Caco-2 (cell line): ENCODE measurements at regions of chr7 and their contacts with region 1.

Region 1: DNA sequence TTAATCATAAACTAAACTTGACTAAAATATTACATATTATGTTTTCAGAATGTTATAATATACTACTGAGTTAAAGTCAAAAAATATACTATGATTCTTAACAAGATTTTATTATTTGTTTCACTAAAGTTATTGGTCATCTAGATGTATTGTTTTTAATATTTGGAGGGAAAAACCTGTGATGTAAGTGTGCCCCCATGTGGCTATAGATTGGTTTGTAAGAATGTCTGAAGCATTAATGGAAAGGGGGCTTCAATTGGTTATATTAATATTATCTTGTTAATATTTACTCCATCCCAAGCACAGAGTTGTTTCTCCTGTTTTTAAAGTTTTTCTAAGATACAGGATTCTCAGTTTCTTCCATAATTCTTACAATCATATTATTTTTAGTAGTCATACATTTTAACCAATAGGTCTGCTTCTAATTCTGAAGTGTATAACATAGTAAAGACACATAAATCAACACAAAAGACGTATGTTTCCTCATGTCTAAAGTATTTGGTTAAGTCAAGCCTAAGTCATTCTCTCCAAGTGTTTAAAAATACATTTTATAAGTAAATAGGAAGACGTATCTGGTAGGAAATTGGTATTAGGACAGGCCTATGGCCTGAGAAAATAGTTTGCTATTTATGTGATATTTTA is 58.0 kb downstream of the GNAT3 start:
- DNase-seq: peak in 1 of 2 experiments; percentile 13
- H3K4me3 ChIP-seq: no peak overlapping the region
- H3K4me3 Mint-ChIP-seq: no peak overlapping the region
- H3K27ac Mint-ChIP-seq: no peak overlapping the region
- H3K4me1 ChIP-seq: peaks cover 14% of the 10 kb centered on the region; the same call in 1 of the 2 replicates
- H3K4me1 Mint-ChIP-seq: no peaks in the 10 kb centered on the region
- H3K27me3 ChIP-seq: no peaks in the 10 kb centered on the region
- H3K27me3 Mint-ChIP-seq: no peaks in the 10 kb centered on the region
- CTCF ChIP-seq: peak; percentile 48 to 49

Region 2: GRCh38 chr7:79806161-79806734 is 647.6 kb before region 1 on chr7:
- CTCF ChIA-PET with region 1: no interaction called
- POLR2A ChIA-PET with region 1: no interaction called
- intact Hi-C with region 1: loop called (anchors 10 kb)
- DNase-seq: no peak
- H3K4me3 ChIP-seq: no peak overlapping the region
- H3K4me3 Mint-ChIP-seq: no peak overlapping the region
- H3K27ac Mint-ChIP-seq: no peak overlapping the region
- H3K4me1 ChIP-seq: no peaks in the 10 kb centered on the region
- H3K4me1 Mint-ChIP-seq: peaks cover 7% of the 10 kb centered on the region
- H3K27me3 ChIP-seq: no peaks in the 10 kb centered on the region; the same call in 1 of the 2 replicates
- H3K27me3 Mint-ChIP-seq: no peaks in the 10 kb centered on the region
- CTCF ChIP-seq: peak; percentile 23 to 33

Region 3: GRCh38 chr7:80060218-80060806 is 393.5 kb before region 1 on chr7:
- CTCF ChIA-PET with region 1: no interaction called
- POLR2A ChIA-PET with region 1: no interaction called
- intact Hi-C with region 1: loop called (anchors 1 kb)
- DNase-seq: peak in 1 of 2 experiments; percentile 24
- H3K4me3 ChIP-seq: no peak overlapping the region
- H3K4me3 Mint-ChIP-seq: no peak overlapping the region
- H3K27ac Mint-ChIP-seq: no peak overlapping the region
- H3K4me1 ChIP-seq: no peaks in the 10 kb centered on the region; the same call in 1 of the 2 replicates
- H3K4me1 Mint-ChIP-seq: no peaks in the 10 kb centered on the region
- H3K27me3 ChIP-seq: no peaks in the 10 kb centered on the region
- H3K27me3 Mint-ChIP-seq: peaks cover 6% of the 10 kb centered on the region
- CTCF ChIP-seq: peak; percentile 31 to 43

Region 4: GRCh38 chr7:80095545-80095944 is 358.3 kb before region 1 on chr7:
- CTCF ChIA-PET with region 1: no interaction called
- POLR2A ChIA-PET with region 1: no interaction called
- intact Hi-C with region 1: loop called (anchors 5 kb)
- DNase-seq: no peak
- H3K4me3 ChIP-seq: no peak overlapping the region
- H3K4me3 Mint-ChIP-seq: no peak overlapping the region
- H3K27ac Mint-ChIP-seq: no peak overlapping the region
- H3K4me1 ChIP-seq: no peaks in the 10 kb centered on the region
- H3K4me1 Mint-ChIP-seq: no peaks in the 10 kb centered on the region
- H3K27me3 ChIP-seq: no peaks in the 10 kb centered on the region
- H3K27me3 Mint-ChIP-seq: no peaks in the 10 kb centered on the region
- CTCF ChIP-seq: peak; percentile 20 to 30